ENCODE measurements at regions of chr12 and their contacts with region 1.

Region 1: DNA sequence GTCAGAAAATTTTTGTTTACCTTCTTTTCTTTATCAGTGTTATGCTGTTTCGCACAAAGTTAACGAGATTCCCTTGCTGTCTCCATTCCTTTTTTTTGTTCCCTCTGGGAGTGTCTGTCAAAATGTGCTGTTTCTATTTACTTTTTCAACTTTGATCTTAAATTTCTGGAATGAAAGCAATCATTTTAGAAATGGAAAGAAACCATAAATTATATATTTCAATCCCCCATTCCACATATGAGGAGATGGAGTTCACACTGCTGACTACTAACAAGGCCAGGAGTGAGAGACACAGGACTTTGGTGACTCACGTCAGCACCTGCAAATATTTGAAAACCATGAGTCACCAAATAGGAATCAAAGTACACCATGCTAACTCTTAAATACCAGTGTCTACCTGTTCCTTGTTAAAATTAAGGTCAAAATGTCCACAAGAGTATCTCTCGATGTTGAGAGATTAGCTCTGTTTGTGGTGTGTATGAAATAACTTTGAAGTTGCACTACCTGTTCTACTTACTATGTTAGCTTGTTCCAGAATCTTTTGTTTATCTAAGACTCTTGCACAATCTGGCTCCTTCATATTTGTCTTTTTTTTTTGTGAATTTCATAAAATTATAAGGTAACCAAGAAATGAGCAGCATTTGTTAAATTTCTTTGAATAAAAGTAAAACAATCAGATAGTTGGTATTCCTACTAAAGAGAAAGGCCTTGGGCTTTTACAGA is 106.0 kb downstream of the RMST start:
- DNase-seq: peak; percentile 58
- H3K4me3 Mint-ChIP-seq: peak overlapping the region; percentile 60
- H3K27ac Mint-ChIP-seq: peak overlapping the region; percentile 99
- H3K4me1 Mint-ChIP-seq: peaks cover 60% of the 10 kb centered on the region
- H3K27me3 Mint-ChIP-seq: no peaks in the 10 kb centered on the region
- CTCF ChIP-seq: no peak

Region 2: DNA sequence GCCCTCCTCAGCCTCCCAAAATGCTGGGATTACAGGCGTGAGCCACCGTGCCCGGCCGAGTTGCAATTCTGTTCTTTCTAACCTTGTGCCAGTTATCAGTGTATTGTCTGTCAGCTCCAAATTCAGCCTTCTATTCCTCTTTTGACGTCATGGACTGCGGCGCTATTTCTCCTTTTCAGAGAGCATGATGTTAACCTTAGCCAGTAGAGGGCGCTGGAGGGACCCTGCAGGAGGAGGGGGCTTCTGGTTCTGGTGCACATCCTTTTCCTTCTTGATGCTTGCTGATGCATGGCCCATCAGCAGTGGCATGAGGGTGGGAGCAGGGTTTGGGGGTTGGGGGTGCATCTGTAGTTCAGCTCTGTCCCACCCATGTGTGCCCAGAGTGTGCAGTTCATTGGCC is 285.3 kb before region 1 on chr12:
- CTCF ChIA-PET with region 1: no interaction called
- intact Hi-C with region 1: no loop called
- DNase-seq: no peak
- H3K4me3 Mint-ChIP-seq: no peak overlapping the region
- H3K27ac Mint-ChIP-seq: no peak overlapping the region
- H3K4me1 Mint-ChIP-seq: no peaks in the 10 kb centered on the region
- H3K27me3 Mint-ChIP-seq: peaks cover 56% of the 10 kb centered on the region
- CTCF ChIP-seq: peak; percentile 28

Region 3: DNA sequence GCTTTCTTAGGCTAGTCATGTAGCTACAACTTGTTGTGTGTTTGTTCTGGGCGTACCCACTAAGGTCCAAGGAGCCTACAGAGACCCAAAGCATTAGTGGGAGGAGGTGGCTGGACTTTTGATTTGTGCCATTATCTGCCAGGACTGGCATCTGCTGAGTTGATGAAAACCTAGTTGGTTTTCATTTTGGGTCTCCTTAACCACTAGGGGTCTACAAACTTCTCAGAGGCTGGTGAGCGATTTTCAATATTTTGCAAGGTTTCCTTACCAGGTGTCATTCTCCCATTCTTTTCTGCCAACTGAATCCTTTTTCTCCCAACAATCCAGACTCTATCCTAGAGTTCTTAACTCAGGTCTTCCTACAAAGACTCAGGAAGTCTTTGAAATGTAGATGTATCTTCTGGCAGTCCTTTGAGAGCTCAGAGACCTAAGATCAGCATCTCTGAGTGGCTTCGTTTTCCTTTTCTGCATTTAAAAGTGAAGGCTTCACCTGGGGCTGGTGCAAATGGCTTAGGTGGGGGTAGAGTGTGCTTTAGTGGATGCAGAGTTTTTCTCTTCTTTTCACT is 256.0 kb before region 1 on chr12:
- CTCF ChIA-PET with region 1: no interaction called
- intact Hi-C with region 1: no loop called
- DNase-seq: no peak
- H3K4me3 Mint-ChIP-seq: no peak overlapping the region
- H3K27ac Mint-ChIP-seq: no peak overlapping the region
- H3K4me1 Mint-ChIP-seq: peaks cover 28% of the 10 kb centered on the region
- H3K27me3 Mint-ChIP-seq: peaks cover 29% of the 10 kb centered on the region
- CTCF ChIP-seq: no peak

Region 4: GRCh38 chr12:97368455-97369163 is 200.0 kb before region 1 on chr12:
- CTCF ChIA-PET with region 1: no interaction called
- intact Hi-C with region 1: no loop called
- DNase-seq: no peak
- H3K4me3 Mint-ChIP-seq: no peak overlapping the region
- H3K27ac Mint-ChIP-seq: no peak overlapping the region
- H3K4me1 Mint-ChIP-seq: no peaks in the 10 kb centered on the region
- H3K27me3 Mint-ChIP-seq: no peaks in the 10 kb centered on the region
- CTCF ChIP-seq: no peak

Region 5: DNA sequence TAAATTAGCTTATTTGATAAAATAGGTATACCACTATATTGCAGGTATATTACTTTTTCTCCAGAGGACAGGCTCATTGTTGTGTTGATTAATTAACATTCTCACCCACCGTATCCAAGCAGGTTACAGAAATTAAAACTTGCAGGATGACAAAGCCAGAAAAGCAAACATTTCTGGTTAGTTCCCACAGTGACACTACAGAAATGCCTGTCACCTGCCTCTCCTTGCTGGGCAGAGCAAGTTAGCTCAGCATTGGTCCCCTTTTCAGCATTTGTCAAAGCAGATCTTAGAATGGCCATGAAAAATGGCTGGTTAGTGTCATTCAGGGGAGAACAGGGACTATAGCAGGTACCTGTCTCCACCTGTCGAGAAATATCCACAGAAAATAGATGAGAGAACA is 67.2 kb before region 1 on chr12:
- CTCF ChIA-PET with region 1: no interaction called
- intact Hi-C with region 1: loop called (anchors 5 kb)
- DNase-seq: no peak
- H3K4me3 Mint-ChIP-seq: no peak overlapping the region
- H3K27ac Mint-ChIP-seq: no peak overlapping the region
- H3K4me1 Mint-ChIP-seq: peaks cover 20% of the 10 kb centered on the region
- H3K27me3 Mint-ChIP-seq: no peaks in the 10 kb centered on the region
- CTCF ChIP-seq: no peak

Region 6: DNA sequence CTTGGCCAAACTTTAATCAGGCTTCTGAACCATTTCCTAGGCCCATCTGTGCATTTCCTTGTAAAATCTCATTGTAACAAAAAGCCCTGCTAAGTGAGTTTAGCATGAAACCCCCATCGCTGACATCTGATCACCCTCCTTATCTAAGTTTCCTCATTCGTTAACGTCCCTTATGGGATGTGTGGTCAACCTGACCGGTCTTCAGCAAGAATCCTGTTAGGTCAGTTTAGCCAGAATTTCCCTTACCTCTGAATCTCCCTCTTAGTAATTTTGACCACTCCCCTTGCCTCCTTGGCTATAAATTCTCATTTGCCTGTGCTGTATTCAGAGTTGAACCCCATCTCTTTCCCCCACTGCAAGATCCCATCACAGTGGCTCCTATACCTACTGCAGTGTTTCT is 133.3 kb after region 1 on chr12:
- CTCF ChIA-PET with region 1: no interaction called
- intact Hi-C with region 1: loop called (anchors 2 kb)
- DNase-seq: peak; percentile 69
- H3K4me3 Mint-ChIP-seq: peak overlapping the region; percentile 10
- H3K27ac Mint-ChIP-seq: peak overlapping the region; percentile 48
- H3K4me1 Mint-ChIP-seq: peaks cover 29% of the 10 kb centered on the region
- H3K27me3 Mint-ChIP-seq: no peaks in the 10 kb centered on the region
- CTCF ChIP-seq: no peak

Region 7: DNA sequence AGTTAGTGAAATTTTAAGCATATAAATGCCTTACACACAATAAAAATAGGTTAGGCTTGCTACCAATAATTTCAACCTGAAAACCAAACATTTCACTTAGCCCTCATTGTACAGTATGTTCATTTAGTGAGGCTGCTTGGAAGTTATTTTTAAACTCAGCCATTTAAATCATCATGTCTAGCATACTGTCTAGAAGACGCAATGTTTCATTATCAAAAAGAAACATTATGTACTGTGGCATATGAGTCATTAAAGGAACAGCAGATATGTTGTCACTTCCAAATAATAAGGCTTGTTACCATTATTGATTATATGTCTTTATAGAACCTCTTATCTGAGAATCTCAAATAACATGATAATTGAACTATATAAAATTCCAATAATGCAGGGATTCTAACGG is 198.7 kb after region 1 on chr12:
- CTCF ChIA-PET with region 1: no interaction called
- intact Hi-C with region 1: loop called (anchors 5 kb)
- DNase-seq: no peak
- H3K4me3 Mint-ChIP-seq: no peak overlapping the region
- H3K27ac Mint-ChIP-seq: no peak overlapping the region
- H3K4me1 Mint-ChIP-seq: peaks cover 22% of the 10 kb centered on the region
- H3K27me3 Mint-ChIP-seq: no peaks in the 10 kb centered on the region
- CTCF ChIP-seq: no peak

Region 8: GRCh38 chr12:98060411-98060810 is 491.8 kb after region 1 on chr12:
- CTCF ChIA-PET with region 1: no interaction called
- intact Hi-C with region 1: no loop called
- DNase-seq: no peak
- H3K4me3 Mint-ChIP-seq: no peak overlapping the region
- H3K27ac Mint-ChIP-seq: no peak overlapping the region
- H3K4me1 Mint-ChIP-seq: no peaks in the 10 kb centered on the region
- H3K27me3 Mint-ChIP-seq: peaks cover 18% of the 10 kb centered on the region
- CTCF ChIP-seq: no peak